H1 (cell line): ENCODE measurements at regions of chr12 and their contacts with region 1.

Region 1: GRCh38 chr12:93742110-93742934 is 65.1 kb downstream of the CRADD start:
- DNase-seq: peak; percentile 13 to 68
- H3K4me3 ChIP-seq: peak overlapping the region; percentile 36 to 68 (median 56); a peak in 7 of 8 replicates
- H3K27ac ChIP-seq: peak overlapping the region; percentile 87
- H3K4me1 ChIP-seq: peaks cover 0 to 17% (median 12%) of the 10 kb centered on the region in 4 experiments; a peak in 4 of 7 replicates
- H3K27me3 ChIP-seq: no peaks in the 10 kb centered on the region
- CTCF ChIP-seq: peak; percentile 33 to 51 (median 38)
- EP300 ChIP-seq: no peak
- POLR2A ChIP-seq: no peak
- RAD21 ChIP-seq: peak; percentile 45 to 68; a peak in 3 of 4 replicates

Region 2: DNA sequence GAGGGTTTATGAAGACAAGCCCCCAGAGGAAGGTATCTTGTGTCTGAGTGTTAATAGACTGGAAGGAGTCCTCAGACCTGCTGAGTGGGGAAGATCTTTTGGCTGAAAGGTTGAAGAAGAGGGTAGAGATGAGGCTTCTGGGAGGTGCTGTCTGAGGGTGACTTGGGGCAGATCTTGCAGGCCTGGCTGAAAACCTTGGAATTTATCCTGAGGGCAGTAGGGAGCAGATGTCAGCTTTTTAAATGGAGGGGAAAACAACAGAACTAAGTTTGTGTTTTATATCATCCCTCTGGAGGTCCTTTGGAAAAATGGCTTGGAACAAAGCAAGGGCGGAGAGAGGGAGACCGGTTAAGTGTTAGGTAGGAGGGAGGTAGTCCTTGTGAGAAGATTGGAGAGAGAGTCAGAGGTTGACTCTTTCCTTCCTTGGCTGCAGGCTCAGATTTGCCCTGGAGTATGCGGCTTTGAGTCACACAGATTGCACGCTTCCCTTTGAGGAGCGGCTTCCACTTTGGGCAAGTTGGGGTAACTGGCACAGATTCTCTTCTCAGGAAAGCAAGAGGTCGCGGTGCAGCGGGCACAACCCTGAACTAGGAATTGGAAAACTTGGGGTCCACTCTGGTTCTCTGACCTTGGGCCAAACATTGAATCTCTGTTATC is 160.1 kb before region 1 on chr12:
- CTCF ChIA-PET with region 1: no interaction called
- POLR2A ChIA-PET with region 1: interaction called, 11 read pairs
- DNase-seq: no peak
- H3K4me3 ChIP-seq: no peak overlapping the region
- H3K27ac ChIP-seq: no peak overlapping the region
- H3K4me1 ChIP-seq: peaks cover 3 to 18% (median 10%) of the 10 kb centered on the region in 4 experiments; a peak in 6 of 7 replicates
- H3K27me3 ChIP-seq: no peaks in the 10 kb centered on the region
- CTCF ChIP-seq: no peak
- EP300 ChIP-seq: no peak
- POLR2A ChIP-seq: no peak
- RAD21 ChIP-seq: no peak

Region 3: GRCh38 chr12:93699271-93700145 is 42.8 kb before region 1 on chr12:
- CTCF ChIA-PET with region 1: interaction called, 3 read pairs
- POLR2A ChIA-PET with region 1: interaction called, 10 read pairs
- DNase-seq: no peak
- H3K4me3 ChIP-seq: peak overlapping the region in 1 of 4 experiments; percentile 13; a peak in 1 of 8 replicates
- H3K27ac ChIP-seq: peak overlapping the region; percentile 30; the same call in 1 of the 2 replicates
- H3K4me1 ChIP-seq: peaks cover 7 to 21% (median 12%) of the 10 kb centered on the region in 4 experiments; a peak in 5 of 7 replicates
- H3K27me3 ChIP-seq: no peaks in the 10 kb centered on the region
- CTCF ChIP-seq: no peak
- EP300 ChIP-seq: no peak
- POLR2A ChIP-seq: no peak
- RAD21 ChIP-seq: no peak

Region 4: DNA sequence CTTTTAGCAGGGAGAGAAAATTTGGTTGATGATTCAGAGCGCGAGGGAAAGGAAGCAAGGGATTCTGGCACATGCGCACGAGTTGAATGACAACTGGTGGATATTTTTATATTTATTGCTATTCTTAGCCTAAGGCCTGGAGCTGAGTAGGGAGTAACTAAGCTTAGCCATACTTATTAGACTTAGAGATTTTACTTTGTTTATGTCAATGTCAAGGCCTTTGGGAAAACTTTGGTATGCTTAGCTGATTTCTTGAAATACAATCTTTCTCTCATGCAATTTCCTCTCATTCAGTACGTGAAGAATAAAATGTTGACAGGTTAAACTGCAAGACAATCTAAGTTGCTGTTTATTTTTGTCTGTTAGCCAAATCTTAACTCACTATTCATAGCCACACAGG is 36.0 kb after region 1 on chr12:
- CTCF ChIA-PET with region 1: no interaction called
- POLR2A ChIA-PET with region 1: no interaction called
- DNase-seq: no peak
- H3K4me3 ChIP-seq: no peak overlapping the region
- H3K27ac ChIP-seq: no peak overlapping the region
- H3K4me1 ChIP-seq: peaks cover 0 to 8% (median 0%) of the 10 kb centered on the region in 4 experiments; a peak in 1 of 7 replicates
- H3K27me3 ChIP-seq: no peaks in the 10 kb centered on the region
- CTCF ChIP-seq: no peak
- EP300 ChIP-seq: no peak
- POLR2A ChIP-seq: no peak
- RAD21 ChIP-seq: no peak